ENCODE measurements at regions of chr9 and their contacts with region 1.

Region 1: DNA sequence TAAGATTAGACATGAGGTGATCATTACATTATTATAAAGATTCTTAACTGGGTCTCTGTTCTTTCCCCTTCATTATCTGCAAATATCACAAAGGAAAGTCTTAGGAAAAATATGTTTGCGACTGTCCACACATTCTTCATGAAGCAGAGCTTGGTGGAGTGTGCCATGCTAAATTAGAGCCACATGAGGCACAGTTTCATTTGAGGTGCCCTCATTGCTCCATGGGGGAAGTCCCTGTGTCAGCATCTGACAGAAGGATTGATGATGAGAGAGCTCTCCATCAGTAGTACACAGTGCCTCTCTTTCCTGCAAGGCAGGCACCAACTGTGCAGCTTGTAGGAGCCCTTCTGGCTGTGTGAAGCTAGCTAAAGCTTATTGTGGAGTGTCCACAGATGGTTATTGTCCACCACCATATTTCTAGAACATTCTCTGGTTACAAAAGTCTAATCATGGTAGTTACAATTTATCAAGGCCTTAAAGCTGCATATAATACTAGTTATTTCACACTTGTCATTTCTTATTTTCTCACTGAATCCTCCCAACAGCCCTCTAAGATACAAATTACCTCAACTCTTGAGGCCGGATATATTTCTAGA is 63.9 kb downstream of the C9orf152 start:
- DNase-seq: no peak
- H3K4me3 Mint-ChIP-seq: no peak overlapping the region
- H3K27ac Mint-ChIP-seq: no peak overlapping the region
- H3K4me1 Mint-ChIP-seq: peaks cover 31% of the 10 kb centered on the region
- H3K27me3 Mint-ChIP-seq: no peaks in the 10 kb centered on the region
- CTCF ChIP-seq: no peak

Region 2: DNA sequence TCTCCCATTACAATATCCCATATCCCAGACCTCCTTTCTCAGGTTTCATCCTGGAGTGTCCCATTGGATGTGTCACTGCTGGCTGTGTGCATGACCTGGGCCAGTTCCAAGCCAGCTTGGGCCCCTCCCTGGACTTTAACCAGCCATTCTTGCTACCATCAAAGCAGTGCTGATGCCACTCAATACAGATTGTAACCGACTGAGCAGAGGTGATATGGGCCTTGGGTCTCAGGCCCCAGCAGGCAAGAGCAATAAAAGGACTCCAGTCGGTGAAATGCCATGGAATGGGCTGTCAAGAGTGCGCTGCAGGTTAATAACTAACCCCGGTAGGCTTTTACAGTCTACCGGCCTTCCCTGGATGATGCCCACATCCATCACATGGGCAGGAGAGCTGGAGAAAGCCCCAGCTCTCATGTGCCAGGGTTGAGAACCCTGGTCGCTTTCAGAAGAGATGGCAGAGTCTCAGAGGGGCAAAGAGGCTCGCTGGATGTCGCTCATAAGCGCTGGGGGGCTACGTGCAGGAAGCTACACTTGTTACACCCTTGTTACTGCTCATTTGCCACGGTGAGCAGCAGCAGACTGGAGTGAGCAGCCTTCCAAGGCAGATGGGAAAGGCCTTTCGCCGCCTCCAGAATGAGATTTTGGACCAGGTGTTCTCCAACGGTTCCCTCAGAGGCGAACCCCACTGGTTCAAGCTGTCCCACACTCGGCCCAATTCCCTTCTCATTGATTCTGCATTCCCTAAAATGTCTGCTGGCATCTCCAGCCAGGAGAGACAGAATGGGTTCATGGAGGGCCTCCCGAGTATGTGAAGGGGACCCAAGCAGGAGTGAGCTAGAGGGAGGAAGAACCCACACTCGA is 836.4 kb before region 1 on chr9:
- CTCF ChIA-PET with region 1: no interaction called
- intact Hi-C with region 1: no loop called
- DNase-seq: no peak
- H3K4me3 Mint-ChIP-seq: no peak overlapping the region
- H3K27ac Mint-ChIP-seq: no peak overlapping the region
- H3K4me1 Mint-ChIP-seq: peaks cover 34% of the 10 kb centered on the region
- H3K27me3 Mint-ChIP-seq: no peaks in the 10 kb centered on the region
- CTCF ChIP-seq: no peak

Region 3: DNA sequence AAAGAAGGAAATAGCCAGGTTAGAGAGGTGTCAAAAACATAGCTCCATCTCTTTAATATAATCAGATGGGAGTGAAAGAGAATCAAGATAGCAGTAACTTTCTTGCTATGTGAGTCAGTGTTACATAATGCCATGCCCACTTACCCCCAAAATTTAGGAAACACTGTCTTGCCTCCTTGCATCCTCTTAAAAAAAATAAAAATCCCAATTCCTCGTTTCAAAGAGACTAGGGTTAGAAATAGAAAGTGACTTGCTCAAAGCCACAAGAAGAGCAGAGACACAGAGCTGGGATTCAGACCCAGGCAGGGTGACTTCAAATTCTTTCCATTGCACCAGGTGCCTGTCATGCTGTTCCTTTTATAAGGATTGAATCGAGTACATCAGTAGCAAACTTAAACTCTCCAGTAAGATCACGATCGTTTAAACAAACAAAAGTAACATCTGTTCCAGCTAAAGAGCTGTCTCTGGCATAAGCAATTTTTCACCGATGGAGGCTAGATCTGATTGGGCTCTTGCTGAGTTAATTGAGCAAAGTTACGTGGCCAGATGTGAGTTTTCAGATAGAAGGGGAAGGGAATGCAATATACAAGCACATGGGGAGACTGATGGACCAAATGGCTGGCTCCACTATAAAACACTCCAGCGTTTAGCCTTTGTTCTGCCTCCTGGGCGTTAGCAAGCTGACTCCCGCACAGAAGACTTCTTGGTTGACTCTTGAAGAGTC is 187.2 kb before region 1 on chr9:
- CTCF ChIA-PET with region 1: no interaction called
- intact Hi-C with region 1: no loop called
- DNase-seq: no peak
- H3K4me3 Mint-ChIP-seq: no peak overlapping the region
- H3K27ac Mint-ChIP-seq: no peak overlapping the region
- H3K4me1 Mint-ChIP-seq: no peaks in the 10 kb centered on the region
- H3K27me3 Mint-ChIP-seq: peaks cover 21% of the 10 kb centered on the region
- CTCF ChIP-seq: no peak

Region 4: DNA sequence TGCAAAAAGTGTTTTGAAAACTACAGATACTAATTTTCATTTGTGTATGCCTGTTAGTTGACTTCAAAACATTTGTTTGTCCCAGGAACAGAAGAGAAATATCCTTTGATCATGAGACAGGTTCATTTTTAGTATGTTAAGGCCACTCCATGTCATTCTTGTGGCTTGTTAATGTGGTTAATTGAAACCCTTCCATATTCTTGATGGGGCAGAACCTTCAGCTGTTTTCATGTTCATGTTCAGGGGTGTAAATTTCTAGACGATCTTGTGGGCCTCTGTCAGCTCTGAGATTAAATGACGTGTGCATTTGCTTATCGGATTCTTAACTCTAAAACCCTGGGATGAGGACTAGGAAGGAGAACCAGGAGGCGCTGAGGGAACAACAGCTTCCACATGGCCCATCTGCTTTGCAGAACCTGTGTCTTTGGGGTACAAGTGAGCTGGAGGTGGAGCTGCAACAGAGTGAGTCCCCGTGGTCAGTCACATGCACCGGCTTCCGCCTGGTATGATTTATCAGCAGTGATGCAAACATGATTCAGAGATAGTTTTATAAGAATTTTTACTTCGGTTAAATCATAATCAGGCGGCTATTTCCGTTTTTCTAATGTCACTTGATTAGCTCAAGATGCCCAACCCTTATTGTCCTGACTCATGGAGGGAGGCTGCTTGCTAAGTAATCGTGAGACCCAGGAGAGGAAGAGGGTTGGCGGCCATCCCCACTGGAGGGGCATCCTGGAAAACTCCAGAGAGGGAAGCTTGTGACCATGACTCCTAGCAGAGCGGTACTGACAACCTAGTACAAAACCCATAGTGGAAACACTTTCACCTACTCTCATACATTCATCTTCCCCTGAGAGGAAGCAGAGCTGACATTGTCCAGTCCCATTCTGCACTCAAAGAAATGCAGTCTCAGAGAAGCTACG is 74.5 kb before region 1 on chr9:
- CTCF ChIA-PET with region 1: no interaction called
- intact Hi-C with region 1: loop called (anchors 5 kb)
- DNase-seq: peak; percentile 28
- H3K4me3 Mint-ChIP-seq: peak overlapping the region; percentile 47
- H3K27ac Mint-ChIP-seq: peak overlapping the region; percentile 85
- H3K4me1 Mint-ChIP-seq: peaks cover 17% of the 10 kb centered on the region
- H3K27me3 Mint-ChIP-seq: no peaks in the 10 kb centered on the region
- CTCF ChIP-seq: no peak